Activated CD4-positive, alpha-beta T cell treated with anti-CD3 and anti-CD28 coated beads, Interleukin-2, amount 10 ng/mL, durations not matched to agents 7 days and 5 days (primary cell): ENCODE measurements at regions of chrX and their contacts with region 1.

Region 1: DNA sequence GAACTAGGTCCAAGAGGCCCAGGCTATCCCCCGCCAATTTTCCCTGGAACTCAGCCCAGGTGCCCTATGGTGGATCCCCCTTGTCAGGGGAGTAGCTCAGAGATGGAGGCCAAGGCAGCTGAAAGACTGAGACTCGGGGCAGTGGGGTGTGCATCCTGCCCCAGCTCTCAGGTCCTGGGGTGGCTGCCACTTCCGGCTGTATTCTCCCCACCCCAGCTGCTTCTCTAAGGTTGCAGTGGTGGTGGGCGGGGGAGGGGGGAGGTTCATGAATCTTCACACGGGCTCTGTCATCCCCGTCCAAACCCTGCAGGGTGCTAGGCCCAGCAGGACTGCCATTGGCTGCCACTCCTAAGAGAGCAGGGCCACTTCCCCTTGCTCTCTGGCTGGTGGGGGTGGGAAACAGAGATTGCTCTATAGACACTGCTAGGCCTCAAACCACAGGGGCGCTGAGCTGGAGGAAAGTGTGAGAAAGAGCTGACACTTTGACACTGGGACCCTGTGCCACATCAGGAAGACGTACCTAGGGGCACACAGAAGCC is 1.5 kb downstream of the SASH3 start:
- DNase-seq: peak; percentile 87
- H3K4me3 Mint-ChIP-seq: peak overlapping the region; percentile 97
- H3K27ac Mint-ChIP-seq: peak overlapping the region; percentile 92
- H3K4me1 Mint-ChIP-seq: peaks cover 62% of the 10 kb centered on the region
- H3K27me3 Mint-ChIP-seq: no peaks in the 10 kb centered on the region

Region 2: DNA sequence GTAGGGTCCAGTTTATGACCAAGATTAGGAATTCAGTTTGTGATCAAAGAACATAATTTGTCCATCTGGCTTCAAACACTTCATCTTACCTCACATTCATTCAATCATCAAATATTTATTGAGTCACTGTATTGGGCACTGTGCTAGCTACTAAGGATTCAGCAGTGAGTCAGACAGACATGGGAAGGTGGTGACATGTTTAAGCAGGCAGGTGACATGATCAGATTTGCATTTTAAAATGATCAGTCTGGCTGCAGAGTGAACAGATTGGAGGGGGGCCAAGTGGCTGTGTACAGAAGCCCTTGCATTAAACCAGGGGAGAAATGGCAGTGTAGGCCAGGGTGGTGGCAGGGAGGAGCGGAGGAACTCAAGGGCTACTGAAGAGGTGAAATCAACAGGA is 101.3 kb before region 1 on chrX:
- CTCF ChIA-PET with region 1: interaction called, 3 read pairs
- POLR2A ChIA-PET with region 1: interaction called, 10 read pairs
- DNase-seq: no peak
- H3K4me3 Mint-ChIP-seq: no peak overlapping the region
- H3K27ac Mint-ChIP-seq: no peak overlapping the region
- H3K4me1 Mint-ChIP-seq: peaks cover 15% of the 10 kb centered on the region
- H3K27me3 Mint-ChIP-seq: no peaks in the 10 kb centered on the region